Left colon (tissue), 2 donors: ENCODE measurements at regions of chr19 and their contacts with region 1.

Region 1: GRCh38 chr19:52237771-52238400 is 31.5 kb upstream of the ZNF766 start:
- DNase-seq: peak in 1 of 2 donors; percentile 55
- ATAC-seq: peak; percentile 79

Region 2: DNA sequence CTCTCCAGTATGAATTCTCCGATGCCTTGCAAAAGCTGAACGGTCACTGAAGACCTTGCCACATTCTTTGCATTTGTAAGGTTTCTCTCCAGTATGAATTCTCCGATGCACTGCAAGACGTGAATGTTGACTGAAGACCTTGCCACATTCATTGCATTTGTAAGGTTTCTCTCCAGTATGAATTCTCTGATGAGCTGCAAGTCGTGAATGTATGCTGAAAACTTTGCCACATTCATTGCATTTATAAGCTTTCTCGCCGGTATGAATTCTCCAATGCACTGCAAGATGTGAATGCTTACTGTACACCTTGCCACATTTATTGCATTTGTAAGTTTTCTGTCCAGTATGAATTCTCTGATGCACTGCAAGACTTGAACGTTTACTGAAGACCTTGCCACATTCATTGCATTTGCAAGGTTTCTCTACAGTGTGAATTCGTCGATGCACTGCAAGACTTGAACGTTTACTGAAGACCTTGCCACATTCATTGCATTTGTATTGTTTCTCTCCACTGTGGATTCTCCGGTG is 122.3 kb before region 1 on chr19:
- intact Hi-C with region 1: no loop called
- DNase-seq: no peak
- ATAC-seq: no peak

Region 3: GRCh38 chr19:52139252-52140031 is 98.4 kb before region 1 on chr19 and contains the start of gene ZNF616:
- intact Hi-C with region 1: loop called in 1 of 2 experiments (anchors 2 kb)
- DNase-seq: peak; percentile 97 to 98
- ATAC-seq: peak; percentile 97
- total RNA-seq, gene ZNF616: 7.1 to 9.2 TPM

Region 4: DNA sequence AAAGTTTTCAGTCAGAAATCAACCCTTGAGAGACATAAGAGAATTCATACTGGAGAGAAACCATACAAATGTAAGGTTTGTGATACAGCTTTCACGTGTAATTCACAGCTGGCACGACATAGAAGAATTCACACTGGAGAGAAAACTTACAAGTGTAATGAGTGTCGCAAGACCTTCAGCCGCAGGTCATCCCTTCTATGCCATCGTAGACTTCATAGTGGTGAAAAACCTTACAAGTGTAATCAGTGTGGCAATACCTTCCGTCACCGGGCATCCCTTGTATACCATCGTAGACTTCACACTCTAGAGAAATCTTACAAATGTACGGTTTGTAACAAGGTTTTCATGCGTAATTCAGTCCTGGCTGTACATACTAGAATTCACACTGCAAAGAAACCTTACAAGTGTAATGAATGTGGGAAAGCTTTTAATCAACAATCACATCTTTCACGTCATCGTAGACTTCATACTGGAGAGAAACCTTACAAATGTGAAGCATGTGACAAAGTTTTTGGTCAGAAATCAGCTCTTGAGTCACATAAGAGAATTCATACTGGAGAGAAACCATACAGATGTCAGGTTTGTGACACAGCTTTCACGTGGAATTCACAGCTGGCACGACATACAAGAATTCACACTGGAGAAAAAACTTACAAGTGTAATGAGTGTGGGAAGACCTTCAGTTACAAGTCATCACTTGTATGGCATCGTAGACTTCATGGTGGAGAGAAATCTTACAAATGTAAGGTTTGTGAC is 316.5 kb after region 1 on chr19:
- intact Hi-C with region 1: no loop called
- DNase-seq: no peak
- ATAC-seq: no peak